Activated CD8-positive, alpha-beta T cell treated with anti-CD3 and anti-CD28 coated beads, Interleukin-2, amount 10 ng/mL, durations not matched to agents 7 days and 5 days (primary cell): ENCODE measurements at regions of chr12 and their contacts with region 1.

Region 1: DNA sequence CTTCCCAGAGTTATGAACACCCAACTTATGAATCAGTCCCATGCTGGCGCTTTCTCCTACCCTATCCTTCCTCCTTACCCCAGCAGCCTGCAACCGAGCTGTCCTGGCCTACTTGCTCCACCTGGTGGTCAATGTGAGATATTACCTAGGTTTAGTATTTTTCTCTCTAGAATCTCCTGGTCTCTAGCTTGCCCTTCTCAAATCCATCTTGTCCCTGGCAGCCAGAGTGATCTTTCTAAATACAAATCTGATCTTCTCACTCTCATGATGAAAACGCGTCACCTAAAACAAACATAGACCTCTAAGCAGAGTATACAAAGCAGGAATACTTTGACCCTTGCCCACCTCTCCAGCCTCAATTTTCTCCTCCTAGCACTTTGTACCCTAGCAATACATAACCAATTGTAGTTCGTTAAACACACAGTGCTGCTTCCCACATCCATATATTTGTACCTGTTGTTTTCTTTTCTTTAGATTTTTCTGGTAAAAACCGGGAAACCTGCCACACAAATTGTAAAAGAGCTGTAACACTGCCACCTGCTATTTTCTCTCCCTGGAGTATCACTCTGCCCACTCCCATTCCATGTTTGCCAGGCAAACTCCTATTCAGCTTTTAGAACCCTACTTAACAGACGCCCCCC is 20.0 kb upstream of the TCP11L2 start:
- DNase-seq: peak; percentile 59
- ATAC-seq: peak; percentile 61
- H3K4me3 Mint-ChIP-seq: no peak overlapping the region
- H3K27ac Mint-ChIP-seq: no peak overlapping the region
- H3K4me1 Mint-ChIP-seq: peaks cover 10% of the 10 kb centered on the region
- H3K27me3 Mint-ChIP-seq: peaks cover 15% of the 10 kb centered on the region

Region 2: GRCh38 chr12:106179086-106179485 is 103.5 kb before region 1 on chr12:
- CTCF ChIA-PET with region 1: no interaction called
- POLR2A ChIA-PET with region 1: no interaction called
- DNase-seq: no peak
- ATAC-seq: no peak
- H3K4me3 Mint-ChIP-seq: no peak overlapping the region
- H3K27ac Mint-ChIP-seq: no peak overlapping the region
- H3K4me1 Mint-ChIP-seq: no peaks in the 10 kb centered on the region
- H3K27me3 Mint-ChIP-seq: peaks cover 2% of the 10 kb centered on the region

Region 3: GRCh38 chr12:106223485-106224354 is 58.9 kb before region 1 on chr12:
- CTCF ChIA-PET with region 1: interaction called, 167 read pairs
- POLR2A ChIA-PET with region 1: no interaction called
- DNase-seq: peak; percentile 78
- ATAC-seq: peak; percentile 86
- H3K4me3 Mint-ChIP-seq: no peak overlapping the region
- H3K27ac Mint-ChIP-seq: no peak overlapping the region
- H3K4me1 Mint-ChIP-seq: peaks cover 25% of the 10 kb centered on the region
- H3K27me3 Mint-ChIP-seq: peaks cover 5% of the 10 kb centered on the region

Region 4: DNA sequence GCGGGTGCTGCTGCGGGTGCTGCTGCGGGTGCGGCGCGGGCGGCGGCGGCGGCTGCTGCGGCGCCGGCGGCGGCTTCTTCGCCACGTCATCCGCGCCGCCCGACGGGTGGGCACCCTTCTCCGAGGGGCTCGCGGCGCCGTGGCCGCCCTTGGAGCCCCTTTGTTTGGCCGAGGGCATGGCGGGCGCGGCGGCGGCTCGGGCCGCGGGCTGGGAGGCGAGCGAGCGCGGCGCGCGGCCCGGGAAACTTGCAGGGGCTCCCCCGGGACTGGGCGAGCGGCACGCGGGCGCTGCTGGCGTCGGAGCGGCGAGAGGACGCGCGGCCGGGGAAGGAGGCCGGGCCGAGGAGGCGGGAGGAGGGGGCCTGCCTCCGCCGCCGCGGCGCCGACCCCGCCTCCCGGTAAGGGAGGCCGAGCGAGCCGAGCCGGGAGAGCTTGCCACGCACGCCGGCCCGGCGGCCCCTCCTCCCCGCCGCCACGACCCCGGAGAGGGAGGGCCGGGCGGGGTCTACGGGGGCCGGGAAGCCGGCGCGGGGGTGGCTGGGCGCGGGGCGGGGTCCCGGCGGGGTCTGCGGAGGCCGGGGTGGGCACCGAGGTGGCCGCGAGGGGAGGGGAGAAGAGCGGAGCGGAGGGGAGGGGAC is 34.8 kb before region 1 on chr12 and contains the start of gene CKAP4:
- CTCF ChIA-PET with region 1: interaction called, 13 read pairs
- POLR2A ChIA-PET with region 1: no interaction called
- DNase-seq: peak; percentile 32
- ATAC-seq: peak; percentile 67
- H3K4me3 Mint-ChIP-seq: peak within 1 kb of the TSS; percentile 65
- H3K27ac Mint-ChIP-seq: no peak within 1 kb of the TSS
- H3K4me1 Mint-ChIP-seq: peaks cover 12% of the 10 kb centered on the region
- H3K27me3 Mint-ChIP-seq: peaks cover 12% of the 10 kb centered on the region
- total RNA-seq, gene CKAP4: 0.47 to 0.52 TPM

Region 5: GRCh38 chr12:106267535-106267934 is 15.0 kb before region 1 on chr12:
- CTCF ChIA-PET with region 1: interaction called, 23 read pairs
- POLR2A ChIA-PET with region 1: no interaction called
- DNase-seq: no peak
- ATAC-seq: peak; percentile 51
- H3K4me3 Mint-ChIP-seq: no peak overlapping the region
- H3K27ac Mint-ChIP-seq: no peak overlapping the region
- H3K4me1 Mint-ChIP-seq: peaks cover 24% of the 10 kb centered on the region
- H3K27me3 Mint-ChIP-seq: peaks cover 28% of the 10 kb centered on the region

Region 6: DNA sequence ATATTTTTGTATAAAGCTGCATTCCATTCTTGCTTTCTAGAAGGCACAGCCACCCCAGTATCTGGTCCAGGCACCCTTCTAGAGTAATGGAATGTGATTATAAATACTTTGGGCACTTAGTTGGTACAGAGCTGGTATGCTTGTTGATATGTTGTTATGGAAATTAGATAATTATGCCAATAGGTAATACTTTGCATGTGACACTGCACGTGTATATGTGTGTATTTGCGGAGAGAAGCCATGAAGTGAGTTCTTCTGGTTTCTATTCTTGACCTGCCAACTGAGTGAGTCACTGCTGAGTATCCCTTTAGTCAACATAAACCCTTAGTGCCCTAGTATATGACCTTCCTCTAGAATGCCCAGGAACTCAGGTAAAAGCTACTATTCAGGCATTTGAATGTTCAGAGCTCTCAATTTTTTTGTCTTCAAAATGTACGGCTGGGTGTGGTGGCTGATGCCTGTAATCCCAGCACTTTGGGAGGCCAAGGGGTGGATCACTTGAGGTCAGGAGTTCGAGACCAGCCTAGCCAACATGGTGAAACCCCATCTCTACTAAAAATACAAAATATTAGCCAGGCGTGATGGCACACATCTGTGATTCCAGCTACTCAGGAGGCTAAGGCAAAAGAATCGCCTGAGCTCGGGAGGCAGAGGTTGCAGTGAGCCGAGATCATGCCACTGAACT is 13.8 kb after region 1 on chr12:
- CTCF ChIA-PET with region 1: interaction called, 29 read pairs
- POLR2A ChIA-PET with region 1: interaction called, 3 read pairs
- DNase-seq: no peak
- ATAC-seq: no peak
- H3K4me3 Mint-ChIP-seq: no peak overlapping the region
- H3K27ac Mint-ChIP-seq: no peak overlapping the region
- H3K4me1 Mint-ChIP-seq: peaks cover 18% of the 10 kb centered on the region
- H3K27me3 Mint-ChIP-seq: peaks cover 2% of the 10 kb centered on the region

Region 7: GRCh38 chr12:106302401-106303201 is 20.0 kb after region 1 on chr12 and contains the start of gene TCP11L2:
- CTCF ChIA-PET with region 1: interaction called, 29 read pairs
- POLR2A ChIA-PET with region 1: interaction called, 3 read pairs
- DNase-seq: peak; percentile 91
- ATAC-seq: peak; percentile 75
- H3K4me3 Mint-ChIP-seq: peak within 1 kb of the TSS; percentile 87
- H3K27ac Mint-ChIP-seq: peak within 1 kb of the TSS; percentile 100
- H3K4me1 Mint-ChIP-seq: peaks cover 32% of the 10 kb centered on the region
- H3K27me3 Mint-ChIP-seq: no peaks in the 10 kb centered on the region
- total RNA-seq, gene TCP11L2: 5.9 to 6.4 TPM

Region 8: GRCh38 chr12:106369607-106370346 is 87.2 kb after region 1 on chr12:
- CTCF ChIA-PET with region 1: no interaction called
- POLR2A ChIA-PET with region 1: no interaction called
- DNase-seq: no peak
- ATAC-seq: no peak
- H3K4me3 Mint-ChIP-seq: no peak overlapping the region
- H3K27ac Mint-ChIP-seq: no peak overlapping the region
- H3K4me1 Mint-ChIP-seq: no peaks in the 10 kb centered on the region
- H3K27me3 Mint-ChIP-seq: no peaks in the 10 kb centered on the region